Left cardiac atrium (tissue), 4 donors: ENCODE measurements at regions of chrX and their contacts with region 1.

Region 1: GRCh38 chrX:48801280-48802088 is at the start of gene HDAC6:
- DNase-seq: peak; percentile 97
- ATAC-seq: peak; percentile 95 to 96
- total RNA-seq, gene HDAC6: 43.1 to 44.6 TPM

Region 2: DNA sequence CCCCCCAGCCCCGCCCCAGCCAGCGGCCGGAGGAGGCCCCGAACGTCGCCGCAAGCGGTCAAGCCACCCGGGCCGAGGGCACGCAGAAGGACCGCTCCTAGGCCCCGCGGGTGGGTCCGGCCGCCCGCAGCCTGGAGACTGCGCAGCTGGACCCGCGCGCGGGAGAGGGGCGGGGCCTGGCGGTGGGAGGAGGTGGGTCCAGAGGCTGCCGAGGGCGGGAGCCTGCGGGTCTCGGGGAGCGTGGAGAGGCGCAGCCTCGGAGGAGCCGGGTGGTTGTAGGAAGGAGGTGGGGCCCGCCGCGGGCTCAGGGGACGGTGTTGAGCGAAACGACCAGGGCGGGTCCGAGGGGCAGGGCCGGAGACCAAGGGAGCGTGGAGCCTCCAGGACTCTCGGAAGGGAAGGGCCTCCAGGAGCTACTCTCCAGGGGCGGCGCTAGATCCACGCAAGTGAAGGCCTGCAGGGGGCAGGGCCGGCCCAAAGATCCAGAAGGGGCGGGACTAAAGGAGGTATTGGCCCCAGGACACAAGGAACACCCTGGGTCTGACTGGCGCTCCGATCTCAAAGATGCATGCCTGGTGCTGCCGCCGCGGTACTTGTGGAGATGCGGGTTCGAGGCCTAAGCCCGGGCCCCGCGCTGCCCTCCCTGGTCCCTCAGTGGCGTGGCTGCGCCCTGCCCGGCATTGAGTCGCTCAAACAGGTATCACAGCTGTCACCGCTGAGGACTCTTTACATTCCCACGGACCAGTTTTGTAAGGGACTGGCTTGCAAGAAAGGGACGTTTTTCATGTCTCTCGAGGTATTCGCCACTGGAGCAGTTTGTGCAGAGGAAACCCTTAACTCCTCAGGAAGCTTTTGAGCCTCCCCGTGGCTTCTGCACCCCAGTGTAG is 90.2 kb after region 1 on chrX:
- intact Hi-C with region 1: loop called in 1 of 2 experiments (anchors 5 kb)
- DNase-seq: peak; percentile 89
- ATAC-seq: peak; percentile 94 to 97